ENCODE measurements at regions of chr17 and their contacts with region 1.

Region 1: GRCh38 chr17:38702166-38702899 is 2.7 kb upstream of the MLLT6 start:
- DNase-seq: peak; percentile 92
- ATAC-seq: peak; percentile 67

Region 2: DNA sequence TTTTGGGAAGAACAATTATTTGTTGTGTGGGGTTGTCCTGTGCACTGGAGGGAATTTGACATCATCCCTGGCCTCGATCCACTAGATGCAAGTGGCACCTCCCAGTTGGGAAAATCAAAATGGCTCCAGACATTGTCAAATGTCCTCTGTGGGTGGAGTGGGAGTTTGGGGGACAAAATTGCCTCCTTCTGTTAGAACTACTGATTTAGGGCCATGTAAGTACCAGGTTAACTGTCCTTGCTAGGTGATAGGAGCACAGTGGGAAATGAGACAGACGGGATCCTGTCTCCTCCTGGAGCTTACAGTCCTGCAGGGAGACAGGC is 217.2 kb before region 1 on chr17:
- intact Hi-C with region 1: no loop called
- DNase-seq: no peak
- ATAC-seq: no peak

Region 3: DNA sequence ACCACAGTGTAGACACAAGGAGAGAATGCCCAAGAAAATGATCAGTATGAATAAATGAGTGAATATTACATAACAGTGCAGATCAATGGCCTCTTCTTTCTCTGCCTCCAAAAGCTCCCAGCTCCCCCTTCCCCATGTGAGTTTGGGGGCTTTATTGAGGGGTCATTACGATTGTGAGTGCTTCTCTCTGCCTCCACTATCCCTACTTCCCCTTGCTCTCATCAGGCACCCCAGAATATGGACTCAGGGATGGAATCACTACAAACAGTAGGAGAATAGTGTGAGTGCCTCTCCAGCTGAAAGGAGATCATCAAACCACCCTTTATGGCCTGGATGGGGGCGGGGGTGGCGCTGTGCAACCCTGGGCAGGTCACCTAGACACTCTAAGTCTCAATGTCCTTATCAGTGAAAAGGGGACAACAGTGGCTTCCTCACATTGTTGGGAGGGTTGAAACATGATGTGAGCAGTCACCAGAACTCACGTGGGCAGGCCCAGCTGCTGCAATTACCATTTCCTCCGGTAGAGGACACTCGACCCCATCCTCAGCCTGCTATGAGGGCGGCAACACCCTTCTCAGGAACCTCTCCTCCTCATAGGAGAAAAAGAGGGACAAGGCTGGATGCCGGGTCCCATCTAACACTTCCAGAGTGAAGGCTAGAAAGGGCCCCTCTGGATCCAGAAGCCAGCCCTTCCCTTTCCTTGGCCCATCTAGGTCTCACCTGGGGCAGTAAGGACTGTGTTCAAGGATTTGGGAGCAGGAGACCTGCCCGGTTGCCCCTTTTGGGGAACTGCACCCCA is 25.4 kb before region 1 on chr17:
- intact Hi-C with region 1: loop called (anchors 2 kb)
- DNase-seq: peak; percentile 86
- ATAC-seq: peak; percentile 78

Region 4: DNA sequence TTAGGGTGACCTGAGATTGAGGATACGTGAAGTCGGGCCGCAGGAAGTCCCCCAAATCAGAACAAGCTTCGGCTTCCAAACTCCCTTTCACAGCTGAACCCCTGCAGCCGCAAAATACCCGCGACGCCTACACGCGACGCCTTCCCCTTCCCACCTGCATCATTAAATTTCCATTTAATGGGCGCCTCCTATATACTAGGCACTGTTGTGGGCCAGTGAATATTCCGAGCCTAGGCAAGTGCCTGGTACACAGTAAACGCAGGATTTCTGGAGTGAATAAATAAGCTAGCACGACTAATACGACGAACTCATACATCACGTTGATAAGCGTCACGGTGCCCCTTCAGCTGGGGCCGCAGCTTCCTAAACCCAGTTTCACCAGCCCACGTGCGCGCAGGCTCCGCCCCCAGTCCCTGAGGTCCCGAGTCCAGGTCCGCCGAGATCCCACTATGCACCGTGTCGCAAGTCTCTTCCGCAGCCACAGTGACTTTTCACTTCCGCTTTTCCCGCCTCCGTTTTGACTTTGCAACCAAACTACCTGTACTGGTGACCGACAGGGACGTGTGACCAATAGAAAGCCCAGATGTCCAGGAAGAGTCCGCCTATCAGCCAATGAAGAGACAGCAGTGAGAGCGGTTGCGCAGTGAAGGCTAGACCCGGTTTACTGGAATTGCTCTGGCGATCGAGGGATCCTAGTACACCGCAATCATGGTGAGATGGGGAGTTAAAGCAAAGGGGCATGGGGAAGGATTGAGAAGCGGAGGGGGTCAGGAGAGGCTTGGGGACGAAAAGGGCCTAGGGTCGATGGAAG is 50.0 kb after region 1 on chr17 and contains the start of gene PSMB3:
- intact Hi-C with region 1: loop called (anchors 5 kb)
- DNase-seq: peak; percentile 97
- ATAC-seq: peak; percentile 86
- total RNA-seq, gene PSMB3: 175 TPM

Measured in Right ventricle myocardium inferior (tissue), 1 donor.